MCF 10A (cell line): ENCODE measurements at regions of chr1 and their contacts with region 1.

Region 1: DNA sequence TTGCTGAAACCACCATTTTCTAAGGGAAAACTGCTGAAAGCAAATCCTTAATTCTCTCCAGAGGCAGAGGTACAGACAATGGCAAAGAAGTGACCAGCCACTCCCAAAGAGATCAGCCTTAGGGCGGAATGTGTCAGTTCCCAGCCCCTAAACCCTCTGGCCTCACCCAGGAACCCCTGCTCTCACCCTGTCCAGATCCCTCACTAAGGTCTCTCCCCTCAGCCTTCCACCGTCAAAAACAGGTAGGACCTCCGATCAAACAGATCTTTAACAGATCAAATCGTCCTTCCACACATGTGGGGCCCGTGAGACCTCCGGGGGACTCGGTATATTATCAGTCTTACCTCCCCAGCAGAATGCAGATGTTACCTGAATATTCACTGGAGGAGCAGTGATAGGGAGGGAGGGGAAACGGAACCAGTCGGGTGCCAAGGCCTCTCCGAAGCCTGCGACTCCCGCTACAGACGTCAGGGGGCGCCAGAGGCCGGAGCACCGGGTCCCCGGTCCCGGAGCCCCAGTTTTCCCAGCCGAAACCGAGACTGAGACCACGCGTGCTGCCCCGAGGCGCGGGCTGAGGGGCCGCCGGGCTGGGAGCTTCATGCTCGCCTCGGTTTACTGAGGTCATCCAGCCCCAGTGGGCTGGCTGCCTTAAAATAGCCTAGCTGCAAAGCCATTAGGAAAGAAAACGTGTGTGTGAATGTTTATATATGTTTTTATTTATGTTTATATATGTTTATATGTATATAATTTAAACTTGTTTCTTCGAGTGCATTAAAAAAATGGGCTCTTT is 23.6 kb downstream of the GPA33 start:
- DNase-seq: peak; percentile 84
- H3K4me3 Mint-ChIP-seq: peak overlapping the region; percentile 32
- H3K27ac Mint-ChIP-seq: peak overlapping the region; percentile 43
- H3K4me1 Mint-ChIP-seq: no peaks in the 10 kb centered on the region
- H3K27me3 Mint-ChIP-seq: peaks cover 18% of the 10 kb centered on the region
- CTCF ChIP-seq: peak; percentile 100

Region 2: DNA sequence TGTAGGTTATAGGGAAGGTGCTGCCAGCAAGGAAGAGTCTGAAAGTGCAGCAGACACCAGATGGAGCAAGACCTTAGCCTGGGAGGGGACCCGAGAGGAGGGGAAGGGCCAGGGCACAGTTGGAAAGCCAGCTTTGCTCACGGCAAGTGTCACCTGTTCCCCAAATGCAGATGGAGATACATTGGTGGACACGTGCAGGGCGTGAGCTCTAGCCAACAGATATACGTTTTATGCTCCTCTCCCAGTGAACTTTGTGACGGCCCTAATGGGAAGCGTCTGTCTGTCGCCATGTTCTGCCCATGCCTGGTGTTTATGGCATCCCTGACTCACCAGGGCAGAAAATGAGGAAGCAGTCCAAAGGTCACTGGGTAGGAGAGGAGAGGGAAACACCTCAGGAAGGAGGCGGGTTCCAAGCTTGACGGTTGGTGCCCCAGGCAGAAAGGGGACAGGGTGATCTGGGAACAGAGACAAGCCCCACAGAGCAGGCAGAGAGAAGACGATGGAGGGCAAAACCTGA is 16.0 kb after region 1 on chr1:
- CTCF ChIA-PET with region 1: interaction called, 29 read pairs
- POLR2A ChIA-PET with region 1: no interaction called
- intact Hi-C with region 1: no loop called
- DNase-seq: peak; percentile 38
- H3K4me3 Mint-ChIP-seq: no peak overlapping the region
- H3K27ac Mint-ChIP-seq: no peak overlapping the region
- H3K4me1 Mint-ChIP-seq: no peaks in the 10 kb centered on the region
- H3K27me3 Mint-ChIP-seq: peaks cover 35% of the 10 kb centered on the region
- CTCF ChIP-seq: no peak

Region 3: DNA sequence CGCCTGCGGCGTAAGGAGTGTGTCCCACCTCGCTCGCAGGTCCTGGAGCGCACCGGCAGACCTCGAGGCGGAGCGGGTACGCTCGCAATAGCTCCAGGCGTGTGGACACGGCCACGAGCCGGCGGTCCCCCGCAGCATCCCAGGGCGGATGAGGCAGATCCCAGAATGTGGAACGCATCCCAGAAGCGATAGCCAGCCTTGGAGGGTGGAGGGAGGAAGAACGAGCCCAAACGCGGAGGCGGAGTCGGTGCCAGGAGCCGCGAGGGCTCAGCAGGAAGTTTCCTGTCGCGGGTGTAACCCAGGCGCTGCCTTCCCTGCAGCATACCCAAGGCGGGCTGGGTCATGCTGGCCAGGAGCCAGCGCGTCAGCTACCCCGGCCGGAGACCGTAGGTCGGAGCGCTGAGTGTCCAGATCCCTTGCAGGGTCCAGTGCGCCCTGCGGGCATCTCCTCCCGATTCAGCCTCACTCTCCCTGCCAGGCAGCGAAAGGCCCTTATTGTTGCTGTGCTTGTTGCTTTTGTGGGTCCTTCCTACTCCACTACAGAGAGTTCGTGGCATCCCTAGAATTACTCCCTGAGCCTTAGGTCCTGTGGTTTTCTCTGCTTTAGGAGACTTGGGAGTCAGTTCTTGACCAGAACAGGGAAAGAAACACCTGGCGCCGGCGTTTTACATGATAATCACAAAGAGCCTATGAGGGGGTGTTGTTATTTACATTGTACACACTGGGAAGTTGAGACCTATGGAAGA is 55.0 kb after region 1 on chr1:
- CTCF ChIA-PET with region 1: interaction called, 259 read pairs
- POLR2A ChIA-PET with region 1: no interaction called
- intact Hi-C with region 1: loop called (anchors 1 kb)
- DNase-seq: peak; percentile 37
- H3K4me3 Mint-ChIP-seq: peak overlapping the region; percentile 38
- H3K27ac Mint-ChIP-seq: peak overlapping the region; percentile 65
- H3K4me1 Mint-ChIP-seq: no peaks in the 10 kb centered on the region
- H3K27me3 Mint-ChIP-seq: peaks cover 10% of the 10 kb centered on the region
- CTCF ChIP-seq: no peak

Region 4: GRCh38 chr1:167210966-167211674 is 144.6 kb after region 1 on chr1:
- CTCF ChIA-PET with region 1: interaction called, 190 read pairs
- POLR2A ChIA-PET with region 1: no interaction called
- intact Hi-C with region 1: no loop called
- DNase-seq: no peak
- H3K4me3 Mint-ChIP-seq: no peak overlapping the region
- H3K27ac Mint-ChIP-seq: no peak overlapping the region
- H3K4me1 Mint-ChIP-seq: no peaks in the 10 kb centered on the region
- H3K27me3 Mint-ChIP-seq: no peaks in the 10 kb centered on the region
- CTCF ChIP-seq: no peak

Region 5: GRCh38 chr1:167342846-167343245 is 276.3 kb after region 1 on chr1:
- CTCF ChIA-PET with region 1: interaction called, 5 read pairs
- POLR2A ChIA-PET with region 1: no interaction called
- intact Hi-C with region 1: loop called (anchors 2 kb)
- DNase-seq: peak; percentile 53
- H3K4me3 Mint-ChIP-seq: no peak overlapping the region
- H3K27ac Mint-ChIP-seq: no peak overlapping the region
- H3K4me1 Mint-ChIP-seq: peaks cover 18% of the 10 kb centered on the region
- H3K27me3 Mint-ChIP-seq: no peaks in the 10 kb centered on the region
- CTCF ChIP-seq: peak; percentile 45